AG04450 (cell line): ENCODE measurements at regions of chr19 and their contacts with region 1.

Region 1: DNA sequence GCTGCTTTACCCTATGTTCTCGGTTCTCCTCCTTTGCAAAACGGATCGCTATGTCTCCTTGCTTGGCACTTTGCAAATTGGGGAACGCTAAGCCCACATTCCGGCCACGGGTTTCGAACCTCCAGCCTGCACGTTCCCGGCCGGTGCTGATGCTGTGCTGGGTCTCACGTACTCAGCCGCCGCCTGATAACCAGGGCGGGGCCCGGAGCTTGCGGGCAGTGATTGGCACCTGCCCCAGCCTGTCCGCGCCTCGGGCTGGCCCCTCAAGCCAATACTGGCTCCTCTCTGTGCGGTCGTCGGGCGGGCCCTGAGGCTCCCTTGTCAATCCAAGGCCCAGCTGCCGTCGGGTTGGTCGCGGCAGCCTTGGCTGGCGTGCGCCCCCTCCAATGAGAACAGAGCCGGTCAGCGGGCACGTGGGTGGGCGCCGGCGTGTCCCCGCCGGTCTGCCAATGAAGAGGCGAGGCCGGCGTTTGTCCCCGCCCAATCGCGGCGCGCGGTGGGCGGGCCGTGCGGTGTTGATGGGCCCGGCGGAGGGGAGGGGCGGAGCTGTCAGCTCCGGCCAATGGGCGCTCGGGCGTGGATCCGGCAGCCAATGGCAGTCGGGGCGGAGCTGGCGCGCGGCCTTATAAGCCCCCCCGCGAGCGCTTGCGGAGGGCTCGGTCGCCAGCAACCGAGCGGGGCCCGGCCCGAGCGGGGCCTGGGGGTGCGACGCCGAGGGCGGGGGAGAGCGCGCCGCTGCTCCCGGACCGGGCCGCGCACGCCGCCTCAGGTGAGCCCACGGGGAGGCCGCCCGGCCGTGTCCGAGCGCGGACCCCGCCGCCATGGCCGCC is at the start of gene KDM4B:
- DNase-seq: peak; percentile 99
- H3K4me3 ChIP-seq: peak within 1 kb of the TSS; percentile 84
- H3K27ac ChIP-seq: peak within 1 kb of the TSS; percentile 61
- H3K27me3 ChIP-seq: no peaks in the 10 kb centered on the region
- CTCF ChIP-seq: no peak
- polyA plus RNA-seq, gene KDM4B: 7.7 and 10.6 TPM in 2 replicates

Region 2: GRCh38 chr19:4660181-4660791 is 308.4 kb before region 1 on chr19:
- CTCF ChIA-PET with region 1: no interaction called
- POLR2A ChIA-PET with region 1: no interaction called
- DNase-seq: no peak
- H3K4me3 ChIP-seq: no peak overlapping the region
- H3K27ac ChIP-seq: no peak overlapping the region
- H3K27me3 ChIP-seq: no peaks in the 10 kb centered on the region
- CTCF ChIP-seq: peak; percentile 9; the same call in 1 of the 2 replicates

Region 3: GRCh38 chr19:4951656-4952055 is 17.0 kb before region 1 on chr19:
- CTCF ChIA-PET with region 1: no interaction called
- POLR2A ChIA-PET with region 1: interaction called, 11 read pairs
- DNase-seq: no peak
- H3K4me3 ChIP-seq: no peak overlapping the region
- H3K27ac ChIP-seq: no peak overlapping the region
- H3K27me3 ChIP-seq: no peaks in the 10 kb centered on the region
- CTCF ChIP-seq: no peak